Activated CD8-positive, alpha-beta T cell treated with anti-CD3 and anti-CD28 coated beads for 36 hours (primary cell): ENCODE measurements at regions of chr11 and their contacts with region 1.

Region 1: DNA sequence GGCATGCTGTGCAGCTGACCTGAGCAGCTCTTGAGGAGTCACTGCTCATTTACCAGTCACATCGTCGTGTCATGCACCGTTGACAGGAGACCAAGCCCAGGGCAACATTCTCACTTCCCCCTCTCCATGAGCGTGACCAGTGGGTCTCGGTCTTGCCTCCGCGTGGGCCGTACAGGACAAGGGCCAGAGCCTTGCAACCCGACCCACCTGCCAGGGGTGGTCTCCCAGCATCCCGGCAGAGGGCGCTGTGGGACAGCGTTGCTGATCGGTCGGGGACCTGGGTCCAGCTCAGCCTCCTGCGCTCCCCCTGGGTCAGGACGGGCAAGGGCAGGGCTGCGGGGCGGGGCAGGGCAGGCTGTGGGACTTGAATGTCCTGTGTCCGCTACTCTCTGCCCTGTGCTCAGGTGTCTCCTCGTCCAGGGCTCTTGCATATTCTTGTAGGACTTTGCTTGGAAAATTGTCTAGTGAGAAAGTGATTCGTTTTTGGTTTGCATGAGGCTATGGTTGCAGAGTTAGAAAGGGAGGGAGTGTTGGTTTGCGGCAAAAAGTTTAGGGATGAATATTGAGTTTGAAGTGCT is 16.2 kb downstream of the EIF4G2 start:
- DNase-seq: peak; percentile 88
- ATAC-seq: peak; percentile 94
- H3K4me3 Mint-ChIP-seq: no peak overlapping the region
- H3K27ac Mint-ChIP-seq: no peak overlapping the region
- H3K4me1 Mint-ChIP-seq: peaks cover 11% of the 10 kb centered on the region
- H3K27me3 Mint-ChIP-seq: peaks cover 8% of the 10 kb centered on the region
- CTCF ChIP-seq: peak; percentile 91

Region 2: DNA sequence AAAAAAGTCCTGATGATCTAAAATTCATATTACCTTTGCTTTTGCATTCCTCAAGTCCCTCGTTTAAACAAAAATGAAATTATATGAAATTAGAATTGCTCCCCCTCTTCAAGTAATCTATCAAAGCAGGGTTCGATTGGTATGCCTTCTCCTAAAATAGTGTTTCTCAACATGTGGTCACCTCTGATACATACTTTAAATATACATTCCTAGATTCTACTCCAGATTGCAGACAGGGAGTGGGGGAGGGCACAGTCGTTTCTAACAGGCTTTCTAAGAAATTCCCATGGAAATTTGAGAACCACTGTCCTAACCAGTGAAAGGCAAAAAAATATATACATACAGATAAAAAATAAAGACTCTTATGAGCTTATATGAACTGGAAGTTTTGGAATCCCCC is 76.4 kb before region 1 on chr11:
- CTCF ChIA-PET with region 1: no interaction called
- POLR2A ChIA-PET with region 1: no interaction called
- intact Hi-C with region 1: no loop called
- DNase-seq: no peak
- ATAC-seq: no peak
- H3K4me3 Mint-ChIP-seq: no peak overlapping the region
- H3K27ac Mint-ChIP-seq: no peak overlapping the region
- H3K4me1 Mint-ChIP-seq: no peaks in the 10 kb centered on the region
- H3K27me3 Mint-ChIP-seq: peaks cover 2% of the 10 kb centered on the region
- CTCF ChIP-seq: no peak

Region 3: DNA sequence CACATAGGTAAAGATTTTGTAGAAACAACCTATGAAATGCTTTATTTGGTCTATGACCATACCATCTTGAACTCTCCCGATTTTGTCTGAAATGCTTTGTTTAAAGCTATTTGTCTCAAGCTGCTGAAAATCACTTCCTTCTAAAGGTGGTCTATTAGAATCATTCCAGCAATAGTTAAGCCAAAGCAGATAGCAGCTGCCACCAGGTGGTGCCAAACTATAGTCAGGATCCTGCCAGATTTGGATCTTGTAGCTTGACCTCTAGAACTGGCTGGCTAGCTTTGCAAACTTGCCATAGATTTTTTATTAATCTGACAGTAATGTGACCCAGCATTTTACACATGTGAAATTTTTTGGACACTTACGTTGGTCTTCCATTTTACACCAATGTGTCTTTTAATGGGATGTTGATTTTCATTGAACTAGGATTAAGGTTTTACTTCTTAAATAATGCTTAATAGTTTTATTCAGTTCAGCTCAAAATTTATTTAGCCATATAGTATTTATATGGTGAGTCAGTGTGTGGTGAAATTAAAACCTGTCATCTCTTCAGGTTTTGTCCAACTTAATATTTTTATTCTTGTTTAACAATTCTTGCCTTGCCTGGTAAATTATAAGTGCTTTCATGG is 21.7 kb before region 1 on chr11:
- CTCF ChIA-PET with region 1: interaction called, 45 read pairs
- POLR2A ChIA-PET with region 1: interaction called, 7 read pairs
- intact Hi-C with region 1: no loop called
- DNase-seq: peak; percentile 60
- ATAC-seq: no peak
- H3K4me3 Mint-ChIP-seq: no peak overlapping the region
- H3K27ac Mint-ChIP-seq: no peak overlapping the region
- H3K4me1 Mint-ChIP-seq: peaks cover 2% of the 10 kb centered on the region
- H3K27me3 Mint-ChIP-seq: no peaks in the 10 kb centered on the region
- CTCF ChIP-seq: peak; percentile 52

Region 4: GRCh38 chr11:10808553-10809372 is 16.3 kb after region 1 on chr11 and contains the start of gene EIF4G2:
- CTCF ChIA-PET with region 1: interaction called, 73 read pairs
- POLR2A ChIA-PET with region 1: interaction called, 117 read pairs
- intact Hi-C with region 1: no loop called
- DNase-seq: peak; percentile 97
- ATAC-seq: peak; percentile 95
- H3K4me3 Mint-ChIP-seq: peak within 1 kb of the TSS; percentile 94
- H3K27ac Mint-ChIP-seq: peak within 1 kb of the TSS; percentile 98
- H3K4me1 Mint-ChIP-seq: peaks cover 33% of the 10 kb centered on the region
- H3K27me3 Mint-ChIP-seq: no peaks in the 10 kb centered on the region
- CTCF ChIP-seq: no peak
- total RNA-seq, gene EIF4G2: 757 to 842 TPM

Region 5: DNA sequence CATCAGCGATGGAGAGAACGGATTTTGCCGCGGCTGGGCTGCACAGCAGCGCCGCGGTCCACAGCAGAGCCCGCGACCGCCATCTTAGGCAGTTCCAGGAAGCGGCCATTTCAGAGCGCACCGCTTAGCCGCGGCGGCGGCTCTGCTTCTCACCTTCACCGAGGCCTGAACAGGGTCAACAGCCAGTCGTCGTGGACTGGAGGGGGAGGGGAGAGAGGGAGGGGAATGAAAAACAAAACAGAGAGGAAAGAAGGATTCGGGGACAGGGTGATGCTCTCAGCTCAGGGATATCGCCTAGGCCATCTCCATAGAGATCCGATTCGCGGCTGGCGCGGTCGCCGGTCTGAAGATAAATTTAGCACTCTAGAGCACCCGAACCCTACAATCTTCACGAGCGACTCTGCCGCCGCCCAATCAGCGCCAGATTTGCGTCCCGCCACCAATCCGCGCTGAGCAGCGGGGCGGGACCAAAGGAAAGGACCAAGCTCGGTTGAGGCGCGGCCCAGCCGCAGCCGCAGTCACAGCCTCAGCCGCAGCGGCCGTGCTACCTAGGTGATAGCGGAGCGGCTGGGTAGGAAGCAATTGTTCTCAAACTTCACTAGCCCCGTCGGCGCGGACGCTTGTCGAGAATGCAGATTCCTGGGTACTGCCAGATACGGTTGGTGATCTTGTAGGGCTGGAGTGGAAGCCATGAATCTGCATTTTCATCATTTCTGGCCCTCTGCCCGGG is 65.4 kb after region 1 on chr11 and contains the start of gene ZBED5:
- CTCF ChIA-PET with region 1: interaction called, 10 read pairs
- POLR2A ChIA-PET with region 1: interaction called, 9 read pairs
- intact Hi-C with region 1: no loop called
- DNase-seq: peak; percentile 97
- ATAC-seq: peak; percentile 94
- H3K4me3 Mint-ChIP-seq: peak within 1 kb of the TSS; percentile 97
- H3K27ac Mint-ChIP-seq: peak within 1 kb of the TSS; percentile 98
- H3K4me1 Mint-ChIP-seq: peaks cover 38% of the 10 kb centered on the region
- H3K27me3 Mint-ChIP-seq: no peaks in the 10 kb centered on the region
- CTCF ChIP-seq: no peak
- total RNA-seq, gene ZBED5: 35.7 to 36.7 TPM

Region 6: GRCh38 chr11:10899121-10899830 is 106.8 kb after region 1 on chr11:
- CTCF ChIA-PET with region 1: interaction called, 12 read pairs
- POLR2A ChIA-PET with region 1: interaction called, 3 read pairs
- intact Hi-C with region 1: no loop called
- DNase-seq: peak; percentile 32
- ATAC-seq: peak; percentile 60
- H3K4me3 Mint-ChIP-seq: no peak overlapping the region
- H3K27ac Mint-ChIP-seq: peak overlapping the region; percentile 87
- H3K4me1 Mint-ChIP-seq: peaks cover 28% of the 10 kb centered on the region
- H3K27me3 Mint-ChIP-seq: no peaks in the 10 kb centered on the region
- CTCF ChIP-seq: no peak

Region 7: GRCh38 chr11:10933455-10934292 is 141.2 kb after region 1 on chr11:
- CTCF ChIA-PET with region 1: interaction called, 66 read pairs
- POLR2A ChIA-PET with region 1: interaction called, 3 read pairs
- intact Hi-C with region 1: loop called (anchors 10 kb)
- DNase-seq: peak; percentile 91
- ATAC-seq: peak; percentile 93
- H3K4me3 Mint-ChIP-seq: peak overlapping the region; percentile 72
- H3K27ac Mint-ChIP-seq: no peak overlapping the region
- H3K4me1 Mint-ChIP-seq: peaks cover 8% of the 10 kb centered on the region
- H3K27me3 Mint-ChIP-seq: peaks cover 31% of the 10 kb centered on the region
- CTCF ChIP-seq: peak; percentile 94

Region 8: GRCh38 chr11:11022125-11022730 is 229.7 kb after region 1 on chr11:
- CTCF ChIA-PET with region 1: interaction called, 54 read pairs
- POLR2A ChIA-PET with region 1: interaction called, 3 read pairs
- intact Hi-C with region 1: loop called (anchors 2 kb)
- DNase-seq: peak; percentile 34
- ATAC-seq: no peak
- H3K4me3 Mint-ChIP-seq: no peak overlapping the region
- H3K27ac Mint-ChIP-seq: no peak overlapping the region
- H3K4me1 Mint-ChIP-seq: no peaks in the 10 kb centered on the region
- H3K27me3 Mint-ChIP-seq: no peaks in the 10 kb centered on the region
- CTCF ChIP-seq: no peak